ENCODE measurements at regions of chr13 and their contacts with region 1.

Region 1: DNA sequence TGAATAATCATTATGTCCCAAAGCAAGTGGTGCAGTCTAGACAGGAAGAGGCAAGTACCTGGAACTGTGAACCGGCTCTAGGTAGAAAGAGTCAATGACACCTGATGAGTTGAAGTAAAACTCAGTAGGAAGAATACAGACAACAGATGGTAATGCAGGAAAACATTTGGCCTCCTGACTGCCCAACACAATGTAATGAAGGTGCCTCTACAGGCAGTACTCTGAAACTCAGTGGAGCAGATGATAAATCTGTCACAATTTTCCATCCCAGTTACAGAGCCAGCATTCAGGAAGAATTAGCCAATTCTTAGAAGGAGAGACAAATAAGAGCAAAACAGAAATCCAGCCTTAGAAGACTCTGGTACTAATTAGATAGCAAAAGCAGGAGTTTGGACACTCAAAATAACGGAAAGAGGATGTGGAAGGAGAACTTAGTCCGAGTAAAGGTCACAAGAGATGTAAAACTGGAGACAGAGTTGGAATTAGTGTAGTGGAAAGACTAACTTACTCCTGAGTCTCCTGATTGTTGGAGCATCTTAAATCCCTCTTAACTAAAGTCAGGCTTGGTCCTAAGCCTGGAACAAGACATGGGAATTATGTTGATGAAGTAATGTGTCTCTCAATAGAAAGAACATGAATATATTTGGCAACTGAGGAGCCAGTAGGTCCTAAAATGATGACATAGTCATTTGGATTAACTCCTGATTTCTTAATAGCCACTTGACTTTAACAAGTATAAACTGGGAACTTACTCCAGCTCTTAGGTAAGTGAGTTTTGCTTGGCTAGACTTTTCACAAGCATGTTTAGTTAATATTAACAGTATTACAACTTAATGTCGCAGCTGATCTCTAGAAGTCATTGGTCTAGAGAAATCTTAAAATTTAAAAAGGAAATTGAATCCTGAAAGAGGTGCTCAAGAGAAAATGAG is 457.3 kb upstream of the MIR17HG start:
- DNase-seq: no peak
- ATAC-seq: no peak
- H3K4me3 ChIP-seq: no peak overlapping the region
- H3K27ac ChIP-seq: no peak overlapping the region
- H3K4me1 ChIP-seq: no peaks in the 10 kb centered on the region
- H3K27me3 ChIP-seq: no peaks in the 10 kb centered on the region
- CTCF ChIP-seq: no peak

Region 2: DNA sequence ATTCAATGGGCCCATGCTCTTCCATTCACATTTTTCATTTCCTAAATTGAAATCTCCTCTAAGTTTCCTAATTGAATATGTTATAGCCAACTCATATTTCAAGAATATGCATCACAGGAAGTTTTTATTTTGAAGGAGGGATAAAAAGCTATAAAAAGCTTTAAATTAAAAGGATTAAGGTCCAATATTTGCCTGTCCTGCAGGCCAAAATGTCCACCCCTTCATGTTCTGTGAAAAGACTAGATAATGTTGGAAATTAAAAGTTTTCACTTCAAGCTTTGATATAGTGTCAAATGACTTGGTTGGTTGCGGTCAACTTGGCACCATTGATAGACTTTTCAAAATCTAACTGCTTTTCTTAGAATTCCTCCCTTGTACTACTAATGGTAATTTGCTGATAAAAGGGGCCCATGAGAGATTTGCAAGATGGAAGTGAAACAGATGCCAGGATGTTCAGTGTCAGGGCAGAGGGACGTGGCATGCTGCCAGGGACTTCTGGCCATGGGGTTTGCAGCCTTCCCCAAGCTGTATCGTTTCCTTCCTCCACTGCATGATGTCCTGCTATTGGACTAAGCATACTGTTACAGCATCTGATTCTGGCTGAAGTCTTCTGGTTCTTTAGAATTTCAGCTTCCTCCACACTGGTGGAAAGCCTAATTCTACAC is 90.0 kb before region 1 on chr13:
- CTCF ChIA-PET with region 1: no interaction called
- POLR2A ChIA-PET with region 1: no interaction called
- intact Hi-C with region 1: no loop called
- DNase-seq: no peak
- ATAC-seq: no peak
- H3K4me3 ChIP-seq: no peak overlapping the region
- H3K27ac ChIP-seq: no peak overlapping the region
- H3K4me1 ChIP-seq: 0 out of 2 replicates have a peak, but pooled peaks cover 4% of the 10 kb centered on the region
- H3K27me3 ChIP-seq: no peaks in the 10 kb centered on the region
- CTCF ChIP-seq: no peak

Region 3: DNA sequence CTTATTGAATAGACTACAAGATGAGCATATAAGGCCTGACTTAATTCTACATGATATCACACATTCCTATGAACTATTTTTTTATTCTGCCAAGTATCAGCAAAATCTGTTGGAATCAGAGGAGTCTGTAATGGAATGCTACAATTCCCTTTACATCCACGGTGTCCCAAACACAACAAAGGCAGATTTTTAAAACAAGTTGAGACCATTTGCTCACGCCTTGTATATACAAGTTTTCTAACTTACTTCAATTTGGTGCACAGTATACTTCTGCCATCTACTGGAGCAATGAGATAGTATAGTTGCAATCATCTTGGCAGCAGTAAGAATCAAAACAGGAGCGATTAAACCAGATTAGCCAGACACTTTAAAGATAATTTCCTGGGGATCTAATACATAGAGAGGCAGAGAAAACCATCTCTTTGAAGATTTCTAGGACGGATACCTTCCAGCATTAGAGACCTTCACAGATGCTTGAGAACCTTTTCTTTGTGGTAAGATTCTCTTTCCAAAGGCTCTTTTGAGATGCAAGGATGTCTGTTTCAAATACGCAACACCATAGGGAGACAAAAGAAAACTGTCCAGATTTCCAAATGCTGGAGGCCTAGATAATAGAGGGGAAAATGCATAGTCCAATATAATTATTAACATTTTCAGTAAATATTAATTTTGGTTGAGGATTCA is 155.3 kb after region 1 on chr13:
- CTCF ChIA-PET with region 1: no interaction called
- POLR2A ChIA-PET with region 1: interaction called, 4 read pairs
- intact Hi-C with region 1: loop called (anchors 10 kb)
- DNase-seq: peak; percentile 33
- ATAC-seq: peak; percentile 83
- H3K4me3 ChIP-seq: no peak overlapping the region
- H3K27ac ChIP-seq: no peak overlapping the region
- H3K4me1 ChIP-seq: no peaks in the 10 kb centered on the region
- H3K27me3 ChIP-seq: no peaks in the 10 kb centered on the region
- CTCF ChIP-seq: peak; percentile 59

Measured in PC-3 (cell line).